ENCODE measurements at regions of chr12 and their contacts with region 1.

Region 1: GRCh38 chr12:101830367-101831325 is at the start of gene GNPTAB:
- DNase-seq: peak; percentile 97
- ATAC-seq: peak; percentile 96
- H3K4me3 Mint-ChIP-seq: peak within 1 kb of the TSS; percentile 100
- H3K27ac Mint-ChIP-seq: peak within 1 kb of the TSS; percentile 96
- H3K4me1 Mint-ChIP-seq: peaks cover 48% of the 10 kb centered on the region
- H3K27me3 Mint-ChIP-seq: peaks cover 2% of the 10 kb centered on the region
- total RNA-seq, gene GNPTAB: 104 to 109 TPM

Region 2: GRCh38 chr12:101697197-101697929 is 133.3 kb before region 1 on chr12 and contains the start of gene CHPT1:
- CTCF ChIA-PET with region 1: no interaction called
- POLR2A ChIA-PET with region 1: no interaction called
- DNase-seq: peak; percentile 60
- ATAC-seq: peak; percentile 86
- H3K4me3 Mint-ChIP-seq: peak within 1 kb of the TSS; percentile 86
- H3K27ac Mint-ChIP-seq: peak within 1 kb of the TSS; percentile 84
- H3K4me1 Mint-ChIP-seq: peaks cover 25% of the 10 kb centered on the region
- H3K27me3 Mint-ChIP-seq: peaks cover 3% of the 10 kb centered on the region
- total RNA-seq, gene CHPT1: 12.6 to 13.1 TPM

Region 3: DNA sequence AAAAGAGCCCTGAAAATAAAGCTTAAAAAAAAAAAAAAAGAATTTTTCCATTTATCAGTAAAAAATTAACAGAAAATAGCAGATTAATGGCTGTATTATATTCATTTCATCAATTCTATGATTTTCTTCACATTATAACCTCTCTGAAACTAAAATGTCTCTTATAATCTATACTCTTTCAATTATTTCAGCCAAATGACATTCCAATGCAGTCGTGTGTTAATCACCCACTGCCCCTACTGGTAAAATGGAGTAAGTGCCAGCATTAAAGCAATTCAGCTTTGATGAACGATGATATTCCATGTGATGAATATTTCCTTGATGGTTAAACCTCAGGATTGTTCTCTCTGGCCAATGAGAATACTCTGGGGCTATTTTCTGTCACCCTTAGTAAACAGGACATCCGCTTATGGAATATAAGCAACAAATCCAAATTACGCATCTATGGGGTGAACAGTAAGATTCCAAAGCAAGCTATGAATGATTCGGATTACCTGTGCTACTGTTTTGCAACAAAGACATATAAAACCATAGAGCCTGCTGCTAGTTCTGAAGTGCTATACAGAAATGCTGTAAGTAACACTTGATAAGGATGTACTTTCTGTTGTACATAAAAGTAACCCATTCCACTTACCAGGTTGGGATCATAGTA is 71.1 kb before region 1 on chr12:
- CTCF ChIA-PET with region 1: interaction called, 12 read pairs
- POLR2A ChIA-PET with region 1: no interaction called
- DNase-seq: no peak
- ATAC-seq: no peak
- H3K4me3 Mint-ChIP-seq: no peak overlapping the region
- H3K27ac Mint-ChIP-seq: no peak overlapping the region
- H3K4me1 Mint-ChIP-seq: no peaks in the 10 kb centered on the region
- H3K27me3 Mint-ChIP-seq: no peaks in the 10 kb centered on the region

Region 4: DNA sequence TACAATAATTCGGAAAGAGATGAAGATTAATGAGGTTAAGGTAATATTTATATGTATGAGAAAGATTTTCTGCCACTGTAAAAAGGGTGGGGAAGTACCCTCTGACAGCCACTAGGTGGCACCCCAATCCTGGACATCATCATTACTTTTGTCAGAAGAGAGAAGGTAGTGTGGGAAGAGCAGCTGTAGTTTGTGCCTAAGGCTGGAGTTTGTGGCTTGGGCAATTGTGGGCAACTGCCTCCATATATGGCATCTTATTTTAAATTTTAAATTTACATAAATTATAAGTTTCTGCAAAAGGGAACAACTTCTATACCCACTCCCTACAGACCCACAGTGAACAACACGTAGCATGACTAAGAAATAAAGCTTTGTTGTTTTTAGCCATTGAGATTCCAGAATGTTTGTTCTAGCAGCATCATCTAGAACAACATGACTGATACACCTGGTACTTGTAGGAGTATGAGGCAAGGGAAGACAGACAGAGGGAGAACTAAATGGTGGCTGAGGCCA is 56.9 kb before region 1 on chr12:
- CTCF ChIA-PET with region 1: interaction called, 201 read pairs
- POLR2A ChIA-PET with region 1: interaction called, 12 read pairs
- DNase-seq: peak; percentile 80
- ATAC-seq: peak; percentile 79
- H3K4me3 Mint-ChIP-seq: no peak overlapping the region
- H3K27ac Mint-ChIP-seq: peak overlapping the region; percentile 17
- H3K4me1 Mint-ChIP-seq: peaks cover 42% of the 10 kb centered on the region
- H3K27me3 Mint-ChIP-seq: no peaks in the 10 kb centered on the region

Region 5: GRCh38 chr12:101792051-101792931 is 38.4 kb before region 1 on chr12:
- CTCF ChIA-PET with region 1: interaction called, 263 read pairs
- POLR2A ChIA-PET with region 1: interaction called, 45 read pairs
- DNase-seq: no peak
- ATAC-seq: peak; percentile 20
- H3K4me3 Mint-ChIP-seq: no peak overlapping the region
- H3K27ac Mint-ChIP-seq: peak overlapping the region; percentile 65
- H3K4me1 Mint-ChIP-seq: peaks cover 60% of the 10 kb centered on the region
- H3K27me3 Mint-ChIP-seq: no peaks in the 10 kb centered on the region

Region 6: DNA sequence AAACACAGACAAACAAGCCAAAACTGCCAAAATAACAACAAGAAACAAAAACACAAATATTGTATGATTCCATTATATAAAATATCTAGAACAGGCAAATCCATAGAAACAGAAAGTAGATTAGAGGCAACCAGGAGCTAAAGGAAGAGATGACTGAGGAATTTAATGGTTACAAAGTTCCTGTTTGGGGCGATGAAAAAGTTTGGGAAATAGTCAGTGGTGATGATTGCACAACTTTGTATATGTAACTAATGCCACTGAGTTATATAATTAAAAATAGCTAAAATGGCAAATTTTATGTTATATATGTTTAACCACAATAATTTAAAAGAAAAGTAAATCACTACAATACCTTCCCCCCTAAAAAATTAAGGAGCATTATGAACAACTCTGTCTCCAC is 24.4 kb before region 1 on chr12:
- CTCF ChIA-PET with region 1: interaction called, 20 read pairs
- POLR2A ChIA-PET with region 1: interaction called, 4 read pairs
- DNase-seq: no peak
- ATAC-seq: no peak
- H3K4me3 Mint-ChIP-seq: no peak overlapping the region
- H3K27ac Mint-ChIP-seq: no peak overlapping the region
- H3K4me1 Mint-ChIP-seq: peaks cover 59% of the 10 kb centered on the region
- H3K27me3 Mint-ChIP-seq: no peaks in the 10 kb centered on the region